ENCODE measurements at regions of chr1 and their contacts with region 1.

Region 1: GRCh38 chr1:195886000-195886399 is 722.2 kb downstream of the KCNT2 start:
- DNase-seq: no peak
- H3K4me3 ChIP-seq: no peak overlapping the region
- H3K27ac ChIP-seq: no peak overlapping the region
- H3K4me1 ChIP-seq: peaks cover 0 to 3% (median 0%) of the 10 kb centered on the region in 4 experiments; a peak in 1 of 7 replicates
- H3K27me3 ChIP-seq: no peaks in the 10 kb centered on the region; a peak in 1 of 7 replicates
- CTCF ChIP-seq: peak in 2 of 3 experiments; percentile 26 to 65; a peak in 2 of 4 replicates
- EP300 ChIP-seq: no peak
- POLR2A ChIP-seq: no peak
- RAD21 ChIP-seq: peak; percentile 23 to 32; a peak in 3 of 4 replicates

Region 2: GRCh38 chr1:195866091-195866780 is 19.8 kb before region 1 on chr1:
- CTCF ChIA-PET with region 1: interaction called, 25 read pairs
- POLR2A ChIA-PET with region 1: no interaction called
- DNase-seq: no peak
- H3K4me3 ChIP-seq: no peak overlapping the region
- H3K27ac ChIP-seq: no peak overlapping the region
- H3K4me1 ChIP-seq: no peaks in the 10 kb centered on the region
- H3K27me3 ChIP-seq: no peaks in the 10 kb centered on the region
- CTCF ChIP-seq: no peak
- EP300 ChIP-seq: no peak
- POLR2A ChIP-seq: no peak
- RAD21 ChIP-seq: no peak

Region 3: GRCh38 chr1:195872376-195872775 is 13.6 kb before region 1 on chr1:
- CTCF ChIA-PET with region 1: interaction called, 25 read pairs
- POLR2A ChIA-PET with region 1: no interaction called
- DNase-seq: no peak
- H3K4me3 ChIP-seq: no peak overlapping the region
- H3K27ac ChIP-seq: no peak overlapping the region
- H3K4me1 ChIP-seq: no peaks in the 10 kb centered on the region
- H3K27me3 ChIP-seq: no peaks in the 10 kb centered on the region
- CTCF ChIP-seq: no peak
- EP300 ChIP-seq: no peak
- POLR2A ChIP-seq: no peak
- RAD21 ChIP-seq: no peak

Region 4: GRCh38 chr1:195897076-195897475 is 11.1 kb after region 1 on chr1:
- CTCF ChIA-PET with region 1: interaction called, 41 read pairs
- POLR2A ChIA-PET with region 1: no interaction called
- DNase-seq: no peak
- H3K4me3 ChIP-seq: no peak overlapping the region
- H3K27ac ChIP-seq: no peak overlapping the region
- H3K4me1 ChIP-seq: no peaks in the 10 kb centered on the region; a peak in 1 of 7 replicates
- H3K27me3 ChIP-seq: peaks cover 0 to 1% (median 0%) of the 10 kb centered on the region in 4 experiments; a peak in 1 of 7 replicates
- CTCF ChIP-seq: peak in 2 of 3 experiments; percentile 22 to 38; a peak in 2 of 4 replicates
- EP300 ChIP-seq: no peak
- POLR2A ChIP-seq: no peak
- RAD21 ChIP-seq: peak; percentile 67 to 68

Region 5: GRCh38 chr1:195958131-195958530 is 72.1 kb after region 1 on chr1:
- CTCF ChIA-PET with region 1: no interaction called
- POLR2A ChIA-PET with region 1: no interaction called
- DNase-seq: no peak
- H3K4me3 ChIP-seq: no peak overlapping the region
- H3K27ac ChIP-seq: no peak overlapping the region
- H3K4me1 ChIP-seq: peaks cover 0 to 3% (median 0%) of the 10 kb centered on the region in 4 experiments; a peak in 2 of 7 replicates
- H3K27me3 ChIP-seq: no peaks in the 10 kb centered on the region
- CTCF ChIP-seq: no peak
- EP300 ChIP-seq: no peak
- POLR2A ChIP-seq: no peak
- RAD21 ChIP-seq: no peak

Region 6: DNA sequence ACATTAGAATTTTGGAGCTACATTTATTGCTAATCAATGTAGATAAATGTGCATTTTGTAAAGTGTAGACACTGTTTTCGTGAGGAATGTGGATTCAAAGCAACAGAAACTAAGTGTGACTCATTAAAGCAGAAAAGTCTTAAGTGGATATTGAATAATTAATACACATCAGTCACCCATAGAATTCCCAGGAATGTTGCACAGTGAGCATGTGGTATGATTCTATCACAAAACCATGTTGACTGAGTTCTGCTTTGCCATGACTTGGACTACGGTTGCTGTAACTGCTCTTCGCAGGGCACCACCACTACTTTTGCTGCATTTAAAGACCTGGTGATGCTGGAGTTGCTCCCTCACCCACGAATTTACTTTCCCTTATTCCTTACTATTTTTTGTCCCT is 250.4 kb after region 1 on chr1:
- CTCF ChIA-PET with region 1: no interaction called
- POLR2A ChIA-PET with region 1: no interaction called
- DNase-seq: no peak
- H3K4me3 ChIP-seq: no peak overlapping the region
- H3K27ac ChIP-seq: no peak overlapping the region
- H3K4me1 ChIP-seq: no peaks in the 10 kb centered on the region
- H3K27me3 ChIP-seq: no peaks in the 10 kb centered on the region
- CTCF ChIP-seq: no peak
- EP300 ChIP-seq: no peak
- POLR2A ChIP-seq: no peak
- RAD21 ChIP-seq: no peak

Region 7: DNA sequence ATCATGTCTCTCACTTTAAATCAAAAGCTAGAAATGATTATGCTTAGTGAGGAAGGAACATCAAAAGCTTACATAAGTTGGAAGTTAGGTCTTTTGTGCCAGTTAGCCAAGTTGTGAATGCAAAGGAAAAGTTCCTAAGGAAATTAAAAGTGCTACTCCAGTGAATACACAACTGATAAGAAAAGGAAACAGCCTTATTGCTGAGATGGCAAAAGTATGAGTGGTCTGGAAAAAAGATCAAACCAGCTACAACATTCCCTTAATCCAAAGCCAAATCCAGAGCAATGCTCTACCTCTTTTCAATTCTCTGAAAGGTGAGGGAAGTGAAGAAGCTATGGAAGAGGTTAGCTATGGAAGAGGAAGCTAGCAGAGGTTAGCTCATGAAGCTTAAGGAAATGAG is 343.5 kb after region 1 on chr1:
- CTCF ChIA-PET with region 1: no interaction called
- POLR2A ChIA-PET with region 1: no interaction called
- DNase-seq: no peak
- H3K4me3 ChIP-seq: no peak overlapping the region
- H3K27ac ChIP-seq: no peak overlapping the region
- H3K4me1 ChIP-seq: no peaks in the 10 kb centered on the region
- H3K27me3 ChIP-seq: no peaks in the 10 kb centered on the region
- CTCF ChIP-seq: no peak
- EP300 ChIP-seq: no peak
- POLR2A ChIP-seq: no peak
- RAD21 ChIP-seq: no peak